Left colon (tissue), 2 donors: ENCODE measurements at regions of chr11 and their contacts with region 1.

Region 1: GRCh38 chr11:74449369-74449931 is 17.9 kb downstream of the KCNE3 start:
- DNase-seq: no peak
- ATAC-seq: peak; percentile 76

Region 2: GRCh38 chr11:74388678-74389327 is 60.6 kb before region 1 on chr11:
- intact Hi-C with region 1: loop called in 1 of 2 experiments (anchors 5 kb)
- DNase-seq: peak; percentile 41 to 72
- ATAC-seq: peak; percentile 81

Region 3: GRCh38 chr11:74570266-74571061 is 121.0 kb after region 1 on chr11:
- intact Hi-C with region 1: loop called in 1 of 2 experiments (anchors 5 kb)
- DNase-seq: peak; percentile 54 to 64
- ATAC-seq: peak; percentile 60